PC-9 (cell line): ENCODE measurements at regions of chr7 and their contacts with region 1.

Region 1: DNA sequence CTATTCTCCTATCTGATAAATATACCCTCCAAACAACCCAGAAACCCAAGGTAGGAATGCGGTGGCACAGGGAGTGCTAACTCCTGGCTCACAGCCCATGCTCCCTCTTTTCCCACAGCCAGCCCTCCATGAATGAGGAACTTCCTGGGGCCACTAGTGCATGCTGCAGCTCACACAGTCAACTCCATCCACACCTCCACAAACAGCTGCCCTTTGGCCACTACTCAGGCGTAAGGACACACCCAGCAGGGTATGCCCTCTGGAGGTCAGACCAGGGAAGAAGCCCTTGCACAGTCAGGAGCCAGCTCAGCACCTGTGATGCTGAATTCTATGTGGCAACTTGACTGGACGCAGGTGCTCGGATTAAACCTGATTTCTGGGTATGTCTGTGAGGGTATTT is 85.2 kb upstream of the PIK3CG start:
- DNase-seq: peak; percentile 78 to 88
- H3K4me3 ChIP-seq: no peak overlapping the region
- H3K27ac ChIP-seq: peak overlapping the region; percentile 70
- H3K4me1 ChIP-seq: peaks cover 34% of the 10 kb centered on the region
- H3K27me3 ChIP-seq: no peaks in the 10 kb centered on the region
- CTCF ChIP-seq: 0 out of 2 replicates have a peak, but pooled peaks have one; percentile 34

Region 2: DNA sequence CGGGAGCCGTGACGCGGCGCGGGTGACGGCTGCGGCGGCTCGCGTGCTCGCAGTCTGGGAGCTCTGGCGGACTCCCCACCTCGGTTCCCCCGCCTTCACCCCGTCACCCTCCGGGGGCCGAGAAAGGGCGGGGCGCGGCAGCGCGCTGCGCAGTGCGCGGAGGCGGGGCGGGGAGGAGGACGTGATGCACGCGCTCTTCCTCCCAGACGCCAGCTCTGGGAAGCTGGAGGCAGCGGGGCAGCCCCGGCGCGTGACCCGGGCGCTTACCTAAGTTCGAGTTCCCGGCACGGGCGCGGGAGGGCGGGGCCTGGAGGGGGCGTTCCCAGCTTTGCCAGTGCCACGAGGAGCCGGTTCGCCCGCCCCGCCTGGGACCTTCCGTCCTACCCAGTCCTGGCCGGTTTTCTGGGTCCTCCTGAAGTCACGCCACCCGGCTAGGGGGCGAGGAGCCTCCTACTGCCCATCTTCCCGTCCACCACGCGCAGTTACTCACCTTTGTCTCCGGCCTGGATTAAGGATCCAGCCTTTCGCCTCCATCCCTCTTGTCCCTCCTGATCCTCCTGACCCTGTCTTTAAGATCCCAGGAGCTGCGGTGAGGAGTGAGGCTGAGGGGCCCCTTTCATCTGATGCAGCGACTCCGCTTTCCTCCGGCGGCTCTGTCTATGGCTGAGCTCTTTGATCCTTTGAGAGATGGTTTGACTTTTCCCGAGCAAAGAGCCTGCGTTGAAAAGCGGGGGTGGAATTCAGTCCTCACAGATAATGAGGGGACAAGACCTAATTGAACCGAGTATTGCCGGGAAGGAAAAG is 494.6 kb before region 1 on chr7:
- CTCF ChIA-PET with region 1: no interaction called
- POLR2A ChIA-PET with region 1: interaction called, 16 read pairs
- intact Hi-C with region 1: loop called (anchors 1 kb)
- DNase-seq: peak; percentile 94 to 100
- H3K4me3 ChIP-seq: peak overlapping the region; percentile 91
- H3K27ac ChIP-seq: peak overlapping the region; percentile 99
- H3K4me1 ChIP-seq: peaks cover 45% of the 10 kb centered on the region
- H3K27me3 ChIP-seq: no peaks in the 10 kb centered on the region
- CTCF ChIP-seq: no peak

Region 3: DNA sequence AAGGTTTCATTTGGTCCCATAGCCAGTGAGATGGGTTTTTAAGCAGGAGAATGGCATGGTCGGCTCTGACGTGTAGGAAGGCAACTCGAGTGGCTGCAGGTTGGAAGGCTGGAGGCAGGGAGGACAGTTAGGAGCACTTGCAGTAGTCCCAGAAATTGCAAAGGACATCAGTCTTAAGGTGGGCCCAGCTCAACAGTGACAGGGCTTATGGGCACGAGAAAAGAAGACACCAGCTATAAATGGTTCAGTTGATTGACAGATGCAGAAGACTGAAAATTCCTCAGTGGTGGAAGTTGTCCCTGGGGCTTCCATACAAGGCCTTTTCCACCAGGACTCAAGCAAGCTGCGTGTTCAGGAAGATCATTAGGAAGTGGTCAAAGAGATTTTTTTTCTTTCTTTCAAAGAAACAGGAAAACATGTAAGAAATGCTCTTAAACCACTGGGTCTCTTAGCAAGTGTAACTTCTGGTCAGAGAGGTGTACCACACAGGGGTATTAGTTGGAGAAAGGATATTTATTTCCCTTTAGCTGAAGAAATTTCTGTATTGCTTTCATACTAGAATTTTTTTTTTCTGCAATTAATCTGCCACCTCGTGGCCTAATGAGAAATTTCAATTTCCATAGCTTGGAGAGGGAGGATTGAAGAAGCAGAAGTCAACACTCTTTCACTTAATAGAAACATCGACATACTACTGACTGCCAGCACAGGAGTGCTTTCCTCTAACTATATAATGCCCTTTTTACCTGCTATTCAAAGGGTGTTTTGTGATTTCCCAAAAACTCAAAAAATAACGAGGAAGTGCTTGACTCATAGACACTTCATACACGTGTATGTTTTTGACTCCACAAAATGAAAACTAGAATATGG is 317.7 kb before region 1 on chr7:
- CTCF ChIA-PET with region 1: no interaction called
- POLR2A ChIA-PET with region 1: no interaction called
- intact Hi-C with region 1: loop called (anchors 2 kb)
- DNase-seq: peak; percentile 33 to 50
- H3K4me3 ChIP-seq: no peak overlapping the region
- H3K27ac ChIP-seq: peak overlapping the region; percentile 88
- H3K4me1 ChIP-seq: peaks cover 40% of the 10 kb centered on the region
- H3K27me3 ChIP-seq: no peaks in the 10 kb centered on the region
- CTCF ChIP-seq: peak; percentile 74

Region 4: GRCh38 chr7:106568680-106569499 is 211.0 kb before region 1 on chr7:
- CTCF ChIA-PET with region 1: no interaction called
- POLR2A ChIA-PET with region 1: interaction called, 3 read pairs
- intact Hi-C with region 1: loop called (anchors 1 kb)
- DNase-seq: peak; percentile 70 to 96
- H3K4me3 ChIP-seq: no peak overlapping the region
- H3K27ac ChIP-seq: peak overlapping the region; percentile 99
- H3K4me1 ChIP-seq: peaks cover 30% of the 10 kb centered on the region
- H3K27me3 ChIP-seq: no peaks in the 10 kb centered on the region
- CTCF ChIP-seq: no peak

Region 5: DNA sequence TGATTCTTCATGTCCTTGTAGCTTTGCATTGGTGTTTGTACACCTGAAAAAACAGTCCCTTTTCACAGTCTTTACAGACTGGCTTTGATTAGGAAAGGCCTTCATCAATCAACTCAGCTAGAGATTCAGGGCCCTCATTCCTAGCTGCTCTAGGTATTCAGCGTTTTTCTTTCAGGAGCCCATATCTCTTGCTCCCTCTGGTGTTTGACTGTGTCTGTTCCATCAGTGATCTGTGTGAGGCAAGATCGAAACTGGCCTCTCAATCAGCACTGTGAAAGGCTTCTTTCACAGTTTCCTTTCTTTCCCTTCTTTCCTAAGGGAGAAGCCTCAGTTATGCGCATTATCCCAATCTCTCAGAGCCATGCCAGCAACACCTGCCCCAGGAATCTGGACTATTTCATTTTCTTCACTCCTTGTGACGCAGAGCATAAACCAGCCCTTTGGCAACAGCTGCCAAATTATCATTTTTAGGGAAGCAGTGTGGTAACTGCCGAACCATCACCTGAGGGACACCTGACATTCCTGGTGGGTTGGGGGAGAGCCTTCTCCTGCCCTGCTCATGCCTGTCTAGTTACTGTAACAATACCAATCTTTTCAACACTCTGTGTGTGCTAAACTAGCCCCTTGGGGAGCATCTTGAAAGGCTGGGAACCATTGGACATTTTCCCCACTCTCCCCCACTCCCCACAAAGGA is 43.2 kb before region 1 on chr7:
- CTCF ChIA-PET with region 1: interaction called, 6 read pairs
- POLR2A ChIA-PET with region 1: no interaction called
- intact Hi-C with region 1: loop called (anchors 2 kb)
- DNase-seq: peak; percentile 33 to 58
- H3K4me3 ChIP-seq: no peak overlapping the region
- H3K27ac ChIP-seq: peak overlapping the region; percentile 2
- H3K4me1 ChIP-seq: no peaks in the 10 kb centered on the region
- H3K27me3 ChIP-seq: no peaks in the 10 kb centered on the region
- CTCF ChIP-seq: peak; percentile 66

Region 6: GRCh38 chr7:106840342-106840741 is 60.5 kb after region 1 on chr7:
- CTCF ChIA-PET with region 1: no interaction called
- POLR2A ChIA-PET with region 1: no interaction called
- intact Hi-C with region 1: no loop called
- DNase-seq: no peak
- H3K4me3 ChIP-seq: no peak overlapping the region
- H3K27ac ChIP-seq: no peak overlapping the region
- H3K4me1 ChIP-seq: no peaks in the 10 kb centered on the region
- H3K27me3 ChIP-seq: no peaks in the 10 kb centered on the region
- CTCF ChIP-seq: no peak

Region 7: GRCh38 chr7:107168233-107169119 is 388.6 kb after region 1 on chr7 and contains the start of gene HBP1:
- CTCF ChIA-PET with region 1: no interaction called
- POLR2A ChIA-PET with region 1: interaction called, 3 read pairs
- intact Hi-C with region 1: loop called (anchors 1 kb)
- DNase-seq: peak; percentile 99
- H3K4me3 ChIP-seq: peak within 1 kb of the TSS; percentile 77
- H3K27ac ChIP-seq: peak within 1 kb of the TSS; percentile 86
- H3K4me1 ChIP-seq: peaks cover 26% of the 10 kb centered on the region
- H3K27me3 ChIP-seq: no peaks in the 10 kb centered on the region
- CTCF ChIP-seq: no peak
- total RNA-seq, gene HBP1: 60.0 and 62.1 TPM in 2 replicates

Region 8: DNA sequence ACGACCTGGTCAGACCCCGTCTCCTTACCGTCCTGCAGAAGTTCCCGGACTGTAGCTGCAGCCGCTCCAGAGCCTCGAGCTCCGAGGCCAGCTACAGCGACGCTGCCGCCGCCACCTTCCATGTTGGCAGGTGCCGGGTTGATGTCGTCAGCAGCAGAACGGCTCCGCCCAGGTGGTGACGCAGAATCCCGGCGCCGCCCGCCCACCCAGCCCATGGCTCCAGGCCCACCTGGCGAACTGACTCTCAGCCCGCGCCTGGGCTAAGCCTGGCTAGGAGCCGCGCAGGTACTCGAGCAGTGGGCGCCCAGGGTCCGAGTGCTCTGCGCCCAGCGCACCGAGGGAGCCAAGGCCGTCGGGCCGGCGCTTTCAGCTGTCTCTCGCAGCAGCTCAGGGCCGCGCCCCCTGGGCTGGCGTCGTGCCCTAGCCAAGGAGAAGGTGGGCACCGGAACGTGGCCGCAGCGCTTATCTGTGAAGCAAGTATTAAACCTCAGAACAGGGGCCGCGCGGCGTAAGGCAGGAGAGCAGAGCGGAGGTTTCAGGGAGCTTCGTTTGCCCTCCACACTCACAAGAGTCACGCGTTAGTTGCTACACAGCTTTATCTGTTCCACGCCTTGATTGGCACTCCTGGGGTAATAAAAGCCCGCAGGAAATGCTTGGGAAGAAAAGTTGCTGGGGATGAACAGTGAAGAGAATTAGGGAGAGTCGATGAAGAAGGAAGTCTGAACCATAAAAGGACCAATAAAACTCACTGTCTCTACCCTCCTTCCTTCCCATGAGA is 784.1 kb after region 1 on chr7 and contains the starts of genes COG5 and DUS4L:
- CTCF ChIA-PET with region 1: no interaction called
- POLR2A ChIA-PET with region 1: no interaction called
- intact Hi-C with region 1: no loop called
- DNase-seq: peak; percentile 58 to 78
- H3K4me3 ChIP-seq: peak within 1 kb of the TSS; percentile 92
- H3K27ac ChIP-seq: peak within 1 kb of the TSS; percentile 89
- H3K4me1 ChIP-seq: peaks cover 41% of the 10 kb centered on the region
- H3K27me3 ChIP-seq: no peaks in the 10 kb centered on the region
- CTCF ChIP-seq: no peak
- total RNA-seq, gene COG5: 32.3 and 43.5 TPM in 2 replicates
- total RNA-seq, gene DUS4L: 22.0 and 25.2 TPM in 2 replicates